ENCODE measurements at regions of chr2 and their contacts with region 1.

Region 1: GRCh38 chr2:202555356-202555755 is 79.4 kb upstream of the FAM117B start:
- DNase-seq: no peak
- H3K4me3 ChIP-seq: no peak overlapping the region
- H3K27ac ChIP-seq: no peak overlapping the region
- H3K4me1 ChIP-seq: no peaks in the 10 kb centered on the region
- H3K27me3 ChIP-seq: no peaks in the 10 kb centered on the region
- CTCF ChIP-seq: no peak
- EP300 ChIP-seq: no peak
- POLR2A ChIP-seq: no peak

Region 2: DNA sequence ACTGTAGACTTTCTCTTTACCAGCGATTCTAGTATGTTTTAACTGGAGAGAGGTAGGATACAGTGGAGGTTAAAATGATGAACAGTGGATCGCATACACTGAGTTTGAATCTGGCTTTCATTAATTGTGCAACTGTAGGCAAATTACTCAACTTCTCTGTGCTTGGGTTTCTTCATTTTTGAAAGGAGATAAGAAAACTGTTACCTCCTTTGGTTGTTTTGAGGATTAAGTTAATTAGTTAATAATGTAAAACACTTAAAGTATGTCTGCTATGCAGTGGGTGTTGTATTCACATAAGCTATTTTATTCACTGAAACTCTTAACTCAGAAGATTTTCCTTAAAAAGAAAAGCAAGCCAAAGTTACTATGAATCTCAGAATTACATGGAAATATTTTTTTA is 571.6 kb after region 1 on chr2:
- in situ Hi-C with region 1: loop called in 1 of 4 experiments (anchors 25 kb)
- intact Hi-C with region 1: no loop called
- DNase-seq: no peak
- H3K4me3 ChIP-seq: no peak overlapping the region
- H3K27ac ChIP-seq: no peak overlapping the region
- H3K4me1 ChIP-seq: peaks cover 0 to 14% (median 5%) of the 10 kb centered on the region in 4 donors
- H3K27me3 ChIP-seq: no peaks in the 10 kb centered on the region
- CTCF ChIP-seq: no peak
- EP300 ChIP-seq: no peak
- POLR2A ChIP-seq: no peak

Measured in transverse colon (tissue), 4 donors.